Mammary epithelial cell (primary cell): ENCODE measurements at regions of chr17 and their contacts with region 1.

Region 1: DNA sequence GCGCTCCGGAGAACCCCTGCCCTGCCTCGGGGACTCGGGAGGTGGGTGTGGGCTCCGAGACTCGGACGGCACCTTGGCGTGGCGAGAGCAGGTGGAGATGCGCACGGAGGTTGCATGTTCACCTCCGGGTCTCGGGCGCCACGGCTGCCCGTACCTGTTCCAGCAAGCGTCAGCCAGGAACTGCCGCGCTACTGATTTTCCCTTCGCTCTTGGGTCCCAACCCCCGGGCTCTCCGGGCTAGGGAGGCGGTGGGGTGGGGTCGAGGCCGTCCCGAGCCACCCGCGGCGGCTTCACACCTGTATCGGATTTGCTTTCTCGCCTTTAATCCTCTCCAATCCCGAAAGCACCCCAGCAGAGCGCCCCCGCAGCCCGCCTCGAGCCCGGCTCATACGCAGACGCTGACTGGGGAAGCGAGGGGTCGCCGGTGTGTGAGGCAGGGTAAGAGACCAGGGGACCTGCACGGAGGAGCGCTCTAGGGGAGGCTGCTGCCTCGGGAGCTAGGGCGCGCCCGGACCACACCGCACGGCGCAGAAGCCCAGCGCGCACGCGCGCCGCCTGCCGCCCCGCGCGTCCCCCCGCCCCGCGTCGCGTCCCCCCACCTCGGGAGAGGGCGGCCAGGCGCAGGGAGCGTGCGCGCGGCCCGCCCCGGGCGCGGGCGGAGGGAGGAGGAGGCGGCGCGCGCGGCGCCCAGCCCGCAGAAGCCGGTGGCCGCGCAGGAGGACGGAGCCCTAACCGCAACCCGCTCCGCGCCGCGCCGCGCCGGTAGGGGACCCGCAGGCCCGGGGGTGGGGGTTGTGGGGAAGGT is at the start of gene DUSP14:
- DNase-seq: peak; percentile 70
- H3K4me3 ChIP-seq: peak within 1 kb of the TSS; percentile 82 to 86 (median 82)
- H3K27ac ChIP-seq: peak within 1 kb of the TSS; percentile 95
- H3K4me1 ChIP-seq: peaks cover 24% of the 10 kb centered on the region
- H3K27me3 ChIP-seq: no peaks in the 10 kb centered on the region
- CTCF ChIP-seq: peak in 1 of 2 donors; percentile 5
- total RNA-seq, gene DUSP14: 121 to 148 TPM

Region 2: DNA sequence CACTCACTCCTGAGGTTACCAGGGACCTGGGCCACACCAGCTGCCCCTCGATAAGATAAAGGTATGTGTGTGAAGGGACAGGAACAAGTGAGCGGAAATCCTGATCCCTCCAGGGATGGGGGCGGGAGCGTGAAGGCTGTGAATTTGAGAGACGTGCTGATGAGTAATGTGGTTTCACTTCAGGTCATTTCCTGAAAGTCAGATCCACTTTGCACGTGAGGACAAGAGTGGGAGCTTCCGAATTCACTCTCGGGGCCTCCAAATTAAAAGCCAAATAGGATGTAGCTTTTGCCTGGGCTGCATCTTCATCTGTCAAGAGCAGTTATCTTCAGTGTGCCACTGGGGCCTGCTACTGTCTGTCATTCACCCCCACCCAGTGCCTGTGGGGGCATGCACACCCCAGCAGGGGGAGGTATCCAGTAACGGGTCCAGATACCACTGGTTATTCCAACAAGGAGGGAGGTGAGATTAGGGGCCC is 639.5 kb before region 1 on chr17:
- CTCF ChIA-PET with region 1: no interaction called
- dilution Hi-C with region 1: no loop called
- in situ Hi-C with region 1: no loop called
- intact Hi-C with region 1: loop called (anchors 10 kb)
- DNase-seq: peak; percentile 58
- H3K4me3 ChIP-seq: no peak overlapping the region
- H3K27ac ChIP-seq: peak overlapping the region; percentile 20
- H3K4me1 ChIP-seq: peaks cover 29% of the 10 kb centered on the region
- H3K27me3 ChIP-seq: no peaks in the 10 kb centered on the region
- CTCF ChIP-seq: peak; percentile 6 to 15

Region 3: DNA sequence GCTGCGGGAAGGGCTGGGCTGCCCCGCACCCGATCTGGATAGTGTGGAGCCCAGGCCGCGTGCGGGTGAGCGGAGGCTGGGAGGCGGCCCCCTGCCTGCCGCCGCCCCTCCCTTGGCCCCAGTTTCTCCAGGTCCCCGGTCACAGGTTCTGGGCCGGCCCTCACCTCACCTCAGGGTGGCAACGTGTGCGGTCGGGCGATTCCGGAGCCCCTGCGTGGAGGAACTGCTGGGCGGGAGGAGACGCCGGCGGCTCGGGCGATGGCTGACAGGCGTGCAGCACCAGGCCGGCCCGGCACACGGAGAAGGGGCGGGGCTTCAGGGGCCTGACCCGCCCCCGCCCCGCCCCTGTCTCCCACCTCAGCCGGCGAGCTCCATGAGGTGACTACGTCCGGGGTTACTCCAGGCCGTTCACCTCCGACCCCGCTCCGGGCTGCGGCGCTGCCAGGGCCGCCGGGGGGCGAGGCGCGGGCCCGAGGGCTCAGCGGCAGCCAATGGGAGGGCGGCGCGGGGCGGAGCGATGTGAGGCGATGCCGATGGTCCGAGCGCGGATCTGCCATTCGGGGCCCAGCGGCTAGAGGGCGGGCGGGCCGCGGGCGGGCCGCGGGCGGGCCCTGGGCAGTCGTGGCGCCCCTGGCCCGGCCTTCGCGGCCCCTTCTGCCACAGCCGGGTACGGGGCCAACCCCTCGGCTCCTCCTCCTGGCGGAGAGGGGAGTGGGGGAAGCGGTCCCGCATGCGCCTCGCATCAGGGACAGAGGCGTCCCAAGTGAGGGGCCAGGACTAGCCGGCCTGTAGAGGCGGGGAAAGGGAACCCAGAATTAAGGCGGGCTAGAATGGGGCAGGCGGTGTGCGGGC is 130.3 kb before region 1 on chr17:
- CTCF ChIA-PET with region 1: no interaction called
- dilution Hi-C with region 1: no loop called
- in situ Hi-C with region 1: no loop called
- intact Hi-C with region 1: no loop called
- DNase-seq: peak; percentile 90
- H3K4me3 ChIP-seq: peak overlapping the region; percentile 73 to 86 (median 80)
- H3K27ac ChIP-seq: peak overlapping the region; percentile 48
- H3K4me1 ChIP-seq: peaks cover 43% of the 10 kb centered on the region
- H3K27me3 ChIP-seq: no peaks in the 10 kb centered on the region
- CTCF ChIP-seq: no peak

Region 4: GRCh38 chr17:37406635-37407461 is 82.6 kb before region 1 on chr17 and contains the starts of genes ACACA and TADA2A:
- CTCF ChIA-PET with region 1: no interaction called
- dilution Hi-C with region 1: no loop called
- in situ Hi-C with region 1: no loop called
- intact Hi-C with region 1: loop called (anchors 2 kb)
- DNase-seq: peak; percentile 80
- H3K4me3 ChIP-seq: peak within 1 kb of the TSS; percentile 89 to 99 (median 97)
- H3K27ac ChIP-seq: peak within 1 kb of the TSS; percentile 80
- H3K4me1 ChIP-seq: peaks cover 8% of the 10 kb centered on the region
- H3K27me3 ChIP-seq: no peaks in the 10 kb centered on the region
- CTCF ChIP-seq: no peak
- total RNA-seq, gene ACACA: 74.3 to 121 TPM
- total RNA-seq, gene TADA2A: 10.3 to 19.1 TPM

Region 5: GRCh38 chr17:37430051-37430627 is 59.3 kb before region 1 on chr17:
- CTCF ChIA-PET with region 1: no interaction called
- dilution Hi-C with region 1: no loop called
- in situ Hi-C with region 1: no loop called
- intact Hi-C with region 1: loop called (anchors 1 kb)
- DNase-seq: peak; percentile 88
- H3K4me3 ChIP-seq: peak overlapping the region in 1 of 3 experiments; percentile 24
- H3K27ac ChIP-seq: peak overlapping the region; percentile 97
- H3K4me1 ChIP-seq: peaks cover 20% of the 10 kb centered on the region
- H3K27me3 ChIP-seq: no peaks in the 10 kb centered on the region
- CTCF ChIP-seq: no peak

Region 6: DNA sequence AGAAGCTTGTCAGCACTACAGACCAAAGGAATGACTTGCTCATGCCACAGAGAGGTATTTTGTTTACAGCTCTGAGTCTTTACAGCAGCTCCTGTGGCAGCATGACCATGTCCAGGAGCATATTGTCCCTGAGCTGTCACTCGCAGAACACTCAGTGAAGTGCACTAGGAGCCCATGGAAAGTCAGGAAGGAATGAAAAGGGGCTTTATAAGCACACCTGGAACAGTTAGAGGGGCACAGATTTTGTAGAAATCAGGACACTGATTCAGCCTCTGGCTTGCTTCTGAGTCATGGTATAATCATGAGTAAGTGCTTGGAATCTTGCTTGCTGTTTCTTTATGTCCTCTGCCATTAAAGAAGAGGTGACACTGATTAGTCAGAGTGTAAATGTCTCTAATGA is 41.8 kb before region 1 on chr17:
- CTCF ChIA-PET with region 1: no interaction called
- dilution Hi-C with region 1: no loop called
- in situ Hi-C with region 1: no loop called
- intact Hi-C with region 1: loop called (anchors 2 kb)
- DNase-seq: peak; percentile 49
- H3K4me3 ChIP-seq: no peak overlapping the region
- H3K27ac ChIP-seq: peak overlapping the region; percentile 18
- H3K4me1 ChIP-seq: peaks cover 37% of the 10 kb centered on the region
- H3K27me3 ChIP-seq: no peaks in the 10 kb centered on the region
- CTCF ChIP-seq: no peak

Region 7: GRCh38 chr17:37465069-37465616 is 24.3 kb before region 1 on chr17:
- CTCF ChIA-PET with region 1: no interaction called
- dilution Hi-C with region 1: no loop called
- in situ Hi-C with region 1: no loop called
- intact Hi-C with region 1: loop called (anchors 1 kb)
- DNase-seq: peak; percentile 84
- H3K4me3 ChIP-seq: no peak overlapping the region
- H3K27ac ChIP-seq: peak overlapping the region; percentile 28
- H3K4me1 ChIP-seq: peaks cover 23% of the 10 kb centered on the region
- H3K27me3 ChIP-seq: no peaks in the 10 kb centered on the region
- CTCF ChIP-seq: no peak

Region 8: DNA sequence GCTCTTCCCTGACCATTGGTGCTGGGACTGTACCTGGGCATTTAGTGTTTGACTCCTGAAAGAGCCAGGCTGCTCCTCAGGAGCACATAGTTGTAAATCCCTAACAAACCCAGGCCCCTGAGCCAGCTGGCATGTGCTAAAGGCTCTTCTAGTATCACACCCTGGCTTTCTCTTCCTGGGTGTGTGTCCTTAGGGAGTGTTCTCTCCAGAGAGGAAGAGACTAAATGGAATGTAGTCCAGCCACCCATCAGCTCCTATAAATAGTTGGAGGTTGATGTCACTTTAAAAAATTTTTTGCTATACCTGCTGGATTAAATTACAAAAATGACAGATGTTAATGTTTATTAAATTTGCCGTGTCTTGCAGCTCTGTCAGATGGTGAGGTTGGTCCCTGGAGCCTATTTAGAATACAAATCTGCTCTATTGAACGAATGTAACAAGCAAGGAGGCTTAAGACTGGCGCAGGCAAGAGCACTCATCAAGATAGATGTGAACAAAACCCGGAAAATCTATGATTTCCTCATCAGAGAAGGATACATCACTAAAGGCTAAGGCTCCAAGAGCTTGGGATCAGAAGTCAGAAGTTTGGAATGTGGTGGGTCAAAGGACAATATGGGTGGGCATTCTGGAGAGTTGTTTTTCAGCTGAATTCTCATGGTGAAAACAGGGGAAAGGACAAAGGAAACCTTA is 12.8 kb before region 1 on chr17:
- CTCF ChIA-PET with region 1: no interaction called
- dilution Hi-C with region 1: no loop called
- in situ Hi-C with region 1: no loop called
- intact Hi-C with region 1: loop called (anchors 1 kb)
- DNase-seq: peak; percentile 75
- H3K4me3 ChIP-seq: no peak overlapping the region
- H3K27ac ChIP-seq: peak overlapping the region; percentile 93
- H3K4me1 ChIP-seq: peaks cover 31% of the 10 kb centered on the region
- H3K27me3 ChIP-seq: no peaks in the 10 kb centered on the region
- CTCF ChIP-seq: no peak